Activated B cell treated with CpG ODN at 0.5 μM for 24 hours (primary cell): ENCODE measurements at regions of chr22 and their contacts with region 1.

Region 1: GRCh38 chr22:33519071-33519973 is 401.0 kb downstream of the LARGE1 start:
- DNase-seq: peak; percentile 22
- ATAC-seq: peak; percentile 51
- H3K4me3 Mint-ChIP-seq: peak overlapping the region; percentile 55
- H3K27ac Mint-ChIP-seq: peak overlapping the region; percentile 78
- H3K4me1 Mint-ChIP-seq: peaks cover 55% of the 10 kb centered on the region
- H3K27me3 Mint-ChIP-seq: no peaks in the 10 kb centered on the region
- CTCF ChIP-seq: no peak

Region 2: GRCh38 chr22:33579448-33580093 is 60.2 kb after region 1 on chr22:
- CTCF ChIA-PET with region 1: interaction called, 130 read pairs
- POLR2A ChIA-PET with region 1: interaction called, 6 read pairs
- intact Hi-C with region 1: loop called (anchors 1 kb)
- DNase-seq: peak; percentile 30
- ATAC-seq: peak; percentile 80
- H3K4me3 Mint-ChIP-seq: peak overlapping the region; percentile 42
- H3K27ac Mint-ChIP-seq: no peak overlapping the region
- H3K4me1 Mint-ChIP-seq: peaks cover 55% of the 10 kb centered on the region
- H3K27me3 Mint-ChIP-seq: no peaks in the 10 kb centered on the region
- CTCF ChIP-seq: peak; percentile 73

Region 3: GRCh38 chr22:33620085-33620484 is 100.8 kb after region 1 on chr22:
- CTCF ChIA-PET with region 1: no interaction called
- POLR2A ChIA-PET with region 1: no interaction called
- intact Hi-C with region 1: no loop called
- DNase-seq: no peak
- ATAC-seq: no peak
- H3K4me3 Mint-ChIP-seq: no peak overlapping the region
- H3K27ac Mint-ChIP-seq: no peak overlapping the region
- H3K4me1 Mint-ChIP-seq: no peaks in the 10 kb centered on the region
- H3K27me3 Mint-ChIP-seq: no peaks in the 10 kb centered on the region
- CTCF ChIP-seq: no peak

Region 4: DNA sequence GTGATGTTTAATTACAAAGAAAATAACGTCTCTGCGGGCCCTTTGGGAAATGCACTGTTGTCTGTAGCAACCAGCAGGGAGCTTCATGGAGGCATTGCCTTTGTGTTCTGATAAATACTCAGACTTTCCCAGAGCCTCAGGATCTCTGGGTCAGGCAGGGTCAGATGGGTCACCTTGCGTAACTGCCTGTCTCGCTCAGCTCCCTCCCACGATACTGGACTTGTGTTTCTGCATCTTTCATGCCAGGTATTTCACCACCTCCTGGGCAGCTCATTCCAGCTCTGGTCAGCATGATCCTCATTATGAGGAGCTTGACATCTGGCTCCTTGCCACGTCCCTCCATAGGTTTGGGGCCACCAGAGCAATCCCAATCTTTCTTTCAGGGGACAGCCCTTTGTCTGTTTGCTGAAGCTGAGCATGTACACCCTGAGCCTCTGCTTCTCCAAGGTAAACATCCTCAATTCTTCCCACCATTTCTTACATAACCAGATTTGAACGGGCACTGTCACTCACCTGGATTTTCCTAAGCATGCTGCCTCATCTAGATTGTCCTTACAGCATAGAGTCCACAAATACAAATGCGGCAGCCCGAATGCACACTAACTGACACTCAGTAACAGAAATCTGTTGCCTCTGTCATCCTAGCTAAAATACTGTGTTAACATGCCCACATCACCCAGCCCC is 238.6 kb after region 1 on chr22:
- CTCF ChIA-PET with region 1: no interaction called
- POLR2A ChIA-PET with region 1: no interaction called
- intact Hi-C with region 1: no loop called
- DNase-seq: no peak
- ATAC-seq: no peak
- H3K4me3 Mint-ChIP-seq: no peak overlapping the region
- H3K27ac Mint-ChIP-seq: no peak overlapping the region
- H3K4me1 Mint-ChIP-seq: peaks cover 7% of the 10 kb centered on the region
- H3K27me3 Mint-ChIP-seq: no peaks in the 10 kb centered on the region
- CTCF ChIP-seq: no peak

Region 5: DNA sequence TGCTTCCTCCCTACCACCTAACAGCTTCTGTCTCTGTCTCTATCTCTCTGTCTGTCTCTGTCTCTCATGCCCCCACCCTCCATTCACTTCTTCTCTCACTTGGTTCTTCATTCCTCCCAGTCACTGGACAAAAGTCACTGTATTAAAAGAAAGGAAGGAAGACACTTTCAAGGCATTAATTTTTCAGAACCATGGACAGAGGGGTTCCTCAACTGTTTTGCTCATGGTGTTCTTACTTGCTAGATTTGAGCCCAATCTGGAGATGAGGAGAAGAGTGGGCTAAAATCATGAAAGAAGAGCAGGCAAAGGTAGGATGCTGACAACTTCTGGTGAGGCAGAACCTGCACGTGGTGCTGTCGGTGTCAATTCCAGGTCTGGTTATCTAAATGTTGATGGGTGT is 517.6 kb after region 1 on chr22:
- CTCF ChIA-PET with region 1: no interaction called
- POLR2A ChIA-PET with region 1: no interaction called
- intact Hi-C with region 1: no loop called
- DNase-seq: no peak
- ATAC-seq: no peak
- H3K4me3 Mint-ChIP-seq: no peak overlapping the region
- H3K27ac Mint-ChIP-seq: no peak overlapping the region
- H3K4me1 Mint-ChIP-seq: no peaks in the 10 kb centered on the region
- H3K27me3 Mint-ChIP-seq: peaks cover 5% of the 10 kb centered on the region
- CTCF ChIP-seq: no peak

Region 6: GRCh38 chr22:34105461-34106062 is 586.2 kb after region 1 on chr22:
- CTCF ChIA-PET with region 1: interaction called, 21 read pairs
- POLR2A ChIA-PET with region 1: no interaction called
- intact Hi-C with region 1: loop called (anchors 1 kb)
- DNase-seq: peak; percentile 15
- ATAC-seq: peak; percentile 45
- H3K4me3 Mint-ChIP-seq: no peak overlapping the region
- H3K27ac Mint-ChIP-seq: no peak overlapping the region
- H3K4me1 Mint-ChIP-seq: no peaks in the 10 kb centered on the region
- H3K27me3 Mint-ChIP-seq: peaks cover 12% of the 10 kb centered on the region
- CTCF ChIP-seq: no peak

Region 7: GRCh38 chr22:35023692-35024363 is 1504.5 kb after region 1 on chr22:
- CTCF ChIA-PET with region 1: interaction called, 3 read pairs
- POLR2A ChIA-PET with region 1: no interaction called
- intact Hi-C with region 1: loop called (anchors 5 kb)
- DNase-seq: peak; percentile 58
- ATAC-seq: no peak
- H3K4me3 Mint-ChIP-seq: no peak overlapping the region
- H3K27ac Mint-ChIP-seq: no peak overlapping the region
- H3K4me1 Mint-ChIP-seq: peaks cover 4% of the 10 kb centered on the region
- H3K27me3 Mint-ChIP-seq: peaks cover 26% of the 10 kb centered on the region
- CTCF ChIP-seq: peak; percentile 63